ENCODE measurements at regions of chr14 and their contacts with region 1.

Region 1: GRCh38 chr14:66507722-66508546 is at the start of gene GPHN:
- DNase-seq: peak; percentile 92
- H3K4me3 Mint-ChIP-seq: peak within 1 kb of the TSS; percentile 96
- H3K27ac Mint-ChIP-seq: peak within 1 kb of the TSS; percentile 85
- H3K4me1 Mint-ChIP-seq: peaks cover 28% of the 10 kb centered on the region
- H3K27me3 Mint-ChIP-seq: peaks cover 7% of the 10 kb centered on the region
- total RNA-seq, gene GPHN: 14.2 to 21.4 TPM

Region 2: GRCh38 chr14:66495218-66496098 is 12.5 kb before region 1 on chr14:
- CTCF ChIA-PET with region 1: interaction called, 7 read pairs
- intact Hi-C with region 1: loop called (anchors 1 kb)
- DNase-seq: peak; percentile 56
- H3K4me3 Mint-ChIP-seq: no peak overlapping the region
- H3K27ac Mint-ChIP-seq: no peak overlapping the region
- H3K4me1 Mint-ChIP-seq: peaks cover 19% of the 10 kb centered on the region
- H3K27me3 Mint-ChIP-seq: no peaks in the 10 kb centered on the region

Region 3: DNA sequence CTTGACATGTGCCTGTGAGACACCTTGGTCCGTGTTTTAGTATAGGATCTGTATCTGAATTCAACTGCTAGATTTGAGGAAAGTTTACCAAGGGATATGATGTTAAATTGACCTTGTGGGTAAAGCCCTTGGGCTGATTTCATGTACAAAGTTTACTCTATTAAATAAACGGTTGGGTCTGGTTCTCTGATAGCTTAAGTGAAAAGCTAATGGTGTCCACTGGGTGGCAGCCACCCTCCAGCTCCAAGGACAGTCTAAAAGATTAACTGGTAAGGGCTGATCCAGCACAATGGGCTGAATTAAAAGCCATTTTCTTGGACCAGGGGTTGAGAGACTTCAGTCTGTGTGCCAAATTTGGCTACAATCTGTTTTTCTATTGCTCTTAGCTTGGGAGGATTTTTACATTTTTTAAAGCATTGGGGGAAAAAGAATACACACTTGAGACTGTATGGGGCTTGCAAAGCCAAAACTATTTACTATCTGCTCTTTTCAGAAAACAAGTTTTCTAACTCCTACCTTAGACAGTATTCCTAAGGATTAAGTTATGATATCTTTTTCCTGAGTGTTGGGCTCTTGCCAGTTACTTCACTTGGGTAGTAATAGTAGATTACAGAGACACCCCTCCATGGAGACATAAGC is 116.5 kb after region 1 on chr14:
- CTCF ChIA-PET with region 1: no interaction called
- intact Hi-C with region 1: loop called (anchors 5 kb)
- DNase-seq: peak; percentile 64
- H3K4me3 Mint-ChIP-seq: no peak overlapping the region
- H3K27ac Mint-ChIP-seq: no peak overlapping the region
- H3K4me1 Mint-ChIP-seq: peaks cover 2% of the 10 kb centered on the region
- H3K27me3 Mint-ChIP-seq: no peaks in the 10 kb centered on the region

Region 4: DNA sequence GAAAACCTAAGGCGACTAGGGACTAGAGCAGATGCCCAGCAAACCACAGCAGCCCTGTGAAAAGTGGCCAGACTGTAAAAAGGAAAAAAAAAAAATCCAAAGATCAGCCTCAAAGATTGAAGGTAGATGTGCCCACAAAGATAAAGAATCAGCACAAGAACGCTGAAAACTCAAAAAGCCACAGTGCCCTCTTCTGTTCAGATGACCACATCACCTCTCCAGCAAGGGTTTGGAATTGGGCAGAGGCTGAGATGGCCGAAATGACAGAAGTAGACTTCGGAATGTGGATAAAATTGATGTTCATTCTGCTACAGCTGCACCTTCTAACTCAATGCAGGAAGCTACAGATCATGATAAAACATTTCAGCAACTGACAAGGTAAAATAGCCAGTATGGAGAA is 154.4 kb after region 1 on chr14:
- CTCF ChIA-PET with region 1: no interaction called
- intact Hi-C with region 1: loop called (anchors 5 kb)
- DNase-seq: peak; percentile 6
- H3K4me3 Mint-ChIP-seq: no peak overlapping the region
- H3K27ac Mint-ChIP-seq: no peak overlapping the region
- H3K4me1 Mint-ChIP-seq: no peaks in the 10 kb centered on the region
- H3K27me3 Mint-ChIP-seq: no peaks in the 10 kb centered on the region

Region 5: GRCh38 chr14:67514650-67515385 is 1006.9 kb after region 1 on chr14:
- CTCF ChIA-PET with region 1: no interaction called
- intact Hi-C with region 1: loop called (anchors 10 kb)
- DNase-seq: peak; percentile 23
- H3K4me3 Mint-ChIP-seq: peak overlapping the region; percentile 75
- H3K27ac Mint-ChIP-seq: no peak overlapping the region
- H3K4me1 Mint-ChIP-seq: peaks cover 5% of the 10 kb centered on the region
- H3K27me3 Mint-ChIP-seq: no peaks in the 10 kb centered on the region